ENCODE measurements at regions of chr3 and their contacts with region 1.

Region 1: DNA sequence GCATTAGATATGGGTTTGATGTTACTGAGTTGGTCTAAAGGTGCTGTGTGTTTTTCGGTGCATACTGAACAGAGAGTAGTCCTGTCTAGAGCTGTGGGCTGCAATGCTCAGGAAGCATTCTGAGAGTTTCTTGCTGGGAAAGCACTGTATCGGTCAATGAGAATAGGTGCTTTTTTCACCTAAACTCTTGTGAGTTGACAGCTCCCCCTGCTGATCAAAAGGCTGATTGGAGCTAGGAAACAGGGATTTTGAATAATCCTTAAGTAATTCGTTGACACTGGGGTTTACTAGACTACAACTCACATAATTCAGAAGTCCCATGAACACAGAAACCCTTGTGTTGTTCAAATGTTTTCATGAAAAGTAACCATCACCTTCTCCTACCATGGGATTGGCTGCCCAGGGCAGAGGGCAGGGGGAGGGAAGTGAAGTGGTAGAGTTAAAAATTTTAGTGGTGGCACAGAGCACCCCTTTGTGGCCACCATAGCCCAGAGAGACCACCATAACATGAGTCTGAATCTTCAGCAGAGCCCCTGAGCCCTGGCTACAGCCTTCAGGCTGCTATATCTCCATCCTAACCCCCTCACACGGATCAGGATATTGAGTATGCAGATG is 13.0 kb upstream of the MANF start:
- DNase-seq: peak; percentile 43
- H3K4me3 ChIP-seq: no peak overlapping the region
- H3K27ac ChIP-seq: no peak overlapping the region
- H3K27me3 ChIP-seq: peaks cover 5% of the 10 kb centered on the region
- CTCF ChIP-seq: peak; percentile 83

Region 2: DNA sequence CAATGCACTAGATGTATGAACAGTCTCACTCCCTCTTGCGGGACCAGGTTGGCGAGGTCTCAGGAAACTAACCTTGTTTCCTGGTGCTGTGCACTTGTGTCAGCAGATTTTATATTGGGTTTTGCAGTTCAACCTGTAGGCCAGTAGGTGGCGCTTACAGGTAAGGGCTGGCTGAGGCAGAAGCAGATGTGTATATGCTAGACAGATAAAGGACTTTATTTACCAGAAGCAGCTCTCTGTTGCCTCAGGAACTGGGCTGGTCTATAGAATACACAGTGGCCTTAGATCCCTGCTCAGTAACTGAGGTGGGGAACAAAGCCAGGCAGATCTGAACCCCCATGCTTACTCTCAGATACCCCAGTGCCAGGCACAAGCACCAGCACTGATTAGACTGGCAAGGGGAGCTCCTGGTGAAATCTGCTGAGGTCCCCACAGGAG is 400.5 kb before region 1 on chr3:
- CTCF ChIA-PET with region 1: interaction called, 11 read pairs
- POLR2A ChIA-PET with region 1: no interaction called
- DNase-seq: peak; percentile 13
- H3K4me3 ChIP-seq: no peak overlapping the region
- H3K27ac ChIP-seq: no peak overlapping the region
- H3K27me3 ChIP-seq: no peaks in the 10 kb centered on the region
- CTCF ChIP-seq: peak; percentile 87

Region 3: DNA sequence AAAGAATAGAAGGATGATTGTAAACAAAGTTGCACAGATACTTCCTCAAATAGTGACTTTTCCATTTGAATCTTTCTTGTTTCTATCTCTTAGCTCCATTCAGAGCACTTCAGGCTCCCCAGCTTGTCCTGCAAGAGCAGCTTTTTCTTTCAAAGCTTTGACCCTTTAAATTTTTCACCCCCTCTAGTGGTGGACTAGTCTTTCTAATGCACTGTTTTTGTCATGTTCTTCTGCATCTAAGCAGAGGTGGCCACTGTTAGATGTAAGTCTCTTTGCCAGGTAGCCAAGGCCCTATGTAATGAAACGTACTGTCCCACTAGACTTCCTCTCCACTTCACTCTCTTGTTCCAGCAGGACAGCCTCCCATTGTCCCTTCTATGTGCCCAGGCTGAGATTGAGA is 61.0 kb before region 1 on chr3:
- CTCF ChIA-PET with region 1: interaction called, 11 read pairs
- POLR2A ChIA-PET with region 1: no interaction called
- DNase-seq: peak; percentile 7
- H3K4me3 ChIP-seq: no peak overlapping the region
- H3K27ac ChIP-seq: no peak overlapping the region
- H3K27me3 ChIP-seq: peaks cover 6% of the 10 kb centered on the region
- CTCF ChIP-seq: peak; percentile 62

Region 4: DNA sequence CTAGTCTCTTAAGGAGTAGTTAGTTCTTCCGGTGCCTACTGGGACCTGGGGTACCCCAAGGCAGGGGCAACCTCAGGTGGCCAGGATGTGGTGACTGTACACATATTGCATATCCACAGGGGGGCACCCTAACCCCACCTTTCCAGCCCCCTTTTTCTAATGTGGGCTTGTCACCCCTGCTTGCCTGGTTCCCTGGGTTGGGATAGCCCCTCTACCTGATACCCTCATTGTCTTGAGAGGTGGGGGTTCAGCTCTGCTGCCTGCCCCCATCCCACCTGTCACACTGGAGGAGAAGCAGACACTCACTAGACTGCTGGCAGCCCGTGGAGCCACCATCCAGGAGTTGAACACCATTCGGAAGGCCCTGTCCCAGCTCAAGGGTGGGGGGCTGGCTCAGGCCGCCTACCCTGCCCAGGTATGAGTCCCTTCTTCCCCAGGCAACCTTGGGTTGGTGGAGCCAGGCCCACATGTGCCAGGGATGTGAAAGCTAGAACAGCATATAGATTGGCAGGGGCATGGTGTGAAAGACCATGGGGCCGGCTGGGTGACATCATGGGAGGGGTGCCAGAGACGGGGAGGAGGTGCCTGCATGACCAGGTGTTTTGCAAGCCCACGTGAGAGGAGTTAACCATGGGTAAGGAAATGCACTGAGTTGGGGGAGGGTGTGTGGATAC is 919.6 kb after region 1 on chr3:
- CTCF ChIA-PET with region 1: no interaction called
- POLR2A ChIA-PET with region 1: no interaction called
- DNase-seq: no peak
- H3K4me3 ChIP-seq: no peak overlapping the region
- H3K27ac ChIP-seq: no peak overlapping the region
- H3K27me3 ChIP-seq: no peaks in the 10 kb centered on the region
- CTCF ChIP-seq: peak; percentile 51

Measured in AG04450 (cell line).